Esophagus muscularis mucosa (tissue), 4 donors: ENCODE measurements at regions of chr5 and their contacts with region 1.

Region 1: DNA sequence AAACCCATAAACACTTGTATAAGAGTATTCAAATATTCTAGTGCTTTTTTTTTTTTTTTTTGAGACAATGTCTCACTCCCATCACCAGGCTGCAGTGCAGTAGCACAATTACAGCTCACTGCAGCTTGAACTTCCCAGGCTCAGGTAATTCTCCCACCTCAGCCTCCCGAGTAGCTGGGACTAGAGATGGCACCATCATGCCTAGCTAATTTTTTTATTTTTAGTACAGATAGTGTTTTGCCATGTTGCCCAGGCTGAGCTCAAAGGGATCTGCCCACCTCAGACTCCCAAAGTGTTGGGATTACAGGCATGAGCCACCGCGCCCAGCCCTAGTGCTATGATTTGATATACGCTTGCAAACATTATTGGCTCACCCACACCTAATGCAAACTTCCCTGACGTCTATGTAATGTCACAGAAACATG is 11.8 kb downstream of the IL6ST start:
- DNase-seq: no peak
- H3K4me3 ChIP-seq: no peak overlapping the region
- H3K27ac ChIP-seq: no peak overlapping the region
- H3K4me1 ChIP-seq: peaks cover 38 to 77% (median 63%) of the 10 kb centered on the region in 4 donors
- H3K27me3 ChIP-seq: no peaks in the 10 kb centered on the region
- CTCF ChIP-seq: peak; percentile 17 to 32 (median 22)
- EP300 ChIP-seq: no peak
- POLR2A ChIP-seq: no peak

Region 2: DNA sequence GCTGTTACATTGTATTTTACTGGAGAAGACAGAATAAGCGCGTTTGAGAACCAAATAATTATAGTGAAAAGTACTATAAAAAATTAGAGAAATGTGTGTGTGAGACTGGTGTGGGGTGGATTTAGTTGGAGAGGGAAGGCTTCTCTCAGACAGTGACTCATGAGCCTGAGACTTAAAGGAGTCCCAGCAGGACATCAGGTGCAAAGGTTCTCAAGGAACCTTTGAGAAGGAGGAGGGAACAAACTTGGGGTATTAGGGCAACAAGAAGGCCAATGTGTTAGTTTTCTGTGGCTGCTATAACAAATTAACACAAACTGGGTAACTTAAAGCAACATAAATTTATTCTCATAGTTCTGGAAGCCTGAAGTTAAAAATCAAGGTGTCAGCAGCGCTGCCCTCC is 240.2 kb before region 1 on chr5:
- intact Hi-C with region 1: no loop called
- DNase-seq: no peak
- H3K4me3 ChIP-seq: no peak overlapping the region
- H3K27ac ChIP-seq: no peak overlapping the region
- H3K4me1 ChIP-seq: no peaks in the 10 kb centered on the region
- H3K27me3 ChIP-seq: no peaks in the 10 kb centered on the region
- CTCF ChIP-seq: no peak
- EP300 ChIP-seq: no peak
- POLR2A ChIP-seq: no peak

Region 3: GRCh38 chr5:56148453-56148971 is 165.5 kb after region 1 on chr5:
- intact Hi-C with region 1: no loop called
- DNase-seq: no peak
- H3K4me3 ChIP-seq: no peak overlapping the region
- H3K27ac ChIP-seq: no peak overlapping the region
- H3K4me1 ChIP-seq: peaks cover 0 to 7% (median 2%) of the 10 kb centered on the region in 4 donors
- H3K27me3 ChIP-seq: no peaks in the 10 kb centered on the region
- CTCF ChIP-seq: no peak
- EP300 ChIP-seq: no peak
- POLR2A ChIP-seq: no peak

Region 4: GRCh38 chr5:56200856-56201666 is 218.1 kb after region 1 on chr5:
- intact Hi-C with region 1: loop called (anchors 5 kb)
- DNase-seq: no peak
- H3K4me3 ChIP-seq: no peak overlapping the region
- H3K27ac ChIP-seq: no peak overlapping the region
- H3K4me1 ChIP-seq: peaks cover 0 to 9% (median 3%) of the 10 kb centered on the region in 4 donors
- H3K27me3 ChIP-seq: no peaks in the 10 kb centered on the region
- CTCF ChIP-seq: peak; percentile 70 to 79 (median 76)
- EP300 ChIP-seq: no peak
- POLR2A ChIP-seq: no peak